Activated CD4-positive, alpha-beta T cell treated with anti-CD3 and anti-CD28 coated beads for 36 hours (primary cell): ENCODE measurements at regions of chr1 and their contacts with region 1.

Region 1: DNA sequence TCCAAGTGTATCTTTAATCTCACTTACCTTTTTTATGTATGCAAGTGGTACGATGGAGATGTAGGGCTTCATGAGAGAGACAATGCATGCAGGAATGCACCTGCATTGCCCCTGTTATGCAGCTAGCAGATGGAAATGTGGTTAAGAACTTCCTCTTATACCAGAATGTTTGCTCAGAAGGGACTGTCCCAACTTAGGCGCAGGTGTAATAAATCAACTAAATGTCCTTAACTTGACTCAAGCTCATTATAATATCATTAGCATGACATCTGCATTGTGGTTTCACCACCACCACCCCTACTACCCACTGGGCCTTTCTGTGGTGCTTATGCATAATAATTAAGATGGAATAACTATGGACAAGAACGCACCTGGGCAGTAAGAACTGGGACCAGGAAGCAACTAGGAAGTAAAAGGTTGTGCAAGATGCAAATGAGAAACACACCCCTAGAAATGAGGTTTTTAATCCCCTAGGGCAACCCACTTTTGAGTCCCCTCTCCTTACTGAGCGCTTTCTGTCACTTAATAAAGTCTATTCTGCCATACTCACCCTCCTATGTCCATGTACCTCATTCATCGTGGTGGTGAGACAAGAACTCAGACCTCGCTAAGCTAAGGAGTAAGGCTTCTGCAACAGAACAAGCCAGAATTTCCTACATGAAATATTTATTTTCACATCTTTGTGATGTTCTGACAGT is 1103.3 kb upstream of the B3GALT2 start:
- DNase-seq: peak; percentile 66
- ATAC-seq: peak; percentile 93
- H3K4me3 Mint-ChIP-seq: peak overlapping the region; percentile 36
- H3K27ac Mint-ChIP-seq: no peak overlapping the region
- H3K4me1 Mint-ChIP-seq: peaks cover 32% of the 10 kb centered on the region
- H3K27me3 Mint-ChIP-seq: no peaks in the 10 kb centered on the region

Region 2: GRCh38 chr1:194062962-194063361 is 226.8 kb before region 1 on chr1:
- CTCF ChIA-PET with region 1: no interaction called
- POLR2A ChIA-PET with region 1: no interaction called
- intact Hi-C with region 1: loop called in 1 of 2 experiments (anchors 5 kb)
- DNase-seq: no peak
- ATAC-seq: no peak
- H3K4me3 Mint-ChIP-seq: no peak overlapping the region
- H3K27ac Mint-ChIP-seq: no peak overlapping the region
- H3K4me1 Mint-ChIP-seq: peaks cover 26% of the 10 kb centered on the region
- H3K27me3 Mint-ChIP-seq: no peaks in the 10 kb centered on the region

Region 3: DNA sequence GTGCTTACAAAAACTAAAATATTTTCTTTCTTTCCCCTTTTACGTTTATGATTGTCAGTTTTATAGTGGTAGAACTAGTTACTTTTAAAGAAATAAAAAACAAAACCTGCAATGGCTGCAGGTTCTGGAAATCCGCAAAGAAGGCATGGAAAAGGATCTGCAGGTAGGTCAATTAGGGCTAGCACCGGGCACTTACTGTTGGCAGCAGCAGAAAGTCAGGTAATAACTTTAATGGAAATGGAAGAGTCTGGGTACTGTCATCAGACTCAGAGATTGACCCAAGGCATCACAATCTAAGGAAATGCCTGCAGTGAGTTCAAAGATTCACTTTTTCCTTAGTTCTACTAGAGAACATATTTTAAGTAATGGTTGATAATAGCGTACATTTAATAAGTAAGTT is 33.0 kb after region 1 on chr1:
- CTCF ChIA-PET with region 1: no interaction called
- POLR2A ChIA-PET with region 1: no interaction called
- intact Hi-C with region 1: no loop called
- DNase-seq: no peak
- ATAC-seq: no peak
- H3K4me3 Mint-ChIP-seq: no peak overlapping the region
- H3K27ac Mint-ChIP-seq: no peak overlapping the region
- H3K4me1 Mint-ChIP-seq: no peaks in the 10 kb centered on the region
- H3K27me3 Mint-ChIP-seq: no peaks in the 10 kb centered on the region